Right ventricle myocardium inferior (tissue), 1 donor: ENCODE measurements at regions of chr3 and their contacts with region 1.

Region 1: GRCh38 chr3:46566036-46566641 is at the start of gene LRRC2:
- DNase-seq: peak; percentile 82
- ATAC-seq: peak; percentile 68
- total RNA-seq, gene LRRC2: 110 TPM

Region 2: DNA sequence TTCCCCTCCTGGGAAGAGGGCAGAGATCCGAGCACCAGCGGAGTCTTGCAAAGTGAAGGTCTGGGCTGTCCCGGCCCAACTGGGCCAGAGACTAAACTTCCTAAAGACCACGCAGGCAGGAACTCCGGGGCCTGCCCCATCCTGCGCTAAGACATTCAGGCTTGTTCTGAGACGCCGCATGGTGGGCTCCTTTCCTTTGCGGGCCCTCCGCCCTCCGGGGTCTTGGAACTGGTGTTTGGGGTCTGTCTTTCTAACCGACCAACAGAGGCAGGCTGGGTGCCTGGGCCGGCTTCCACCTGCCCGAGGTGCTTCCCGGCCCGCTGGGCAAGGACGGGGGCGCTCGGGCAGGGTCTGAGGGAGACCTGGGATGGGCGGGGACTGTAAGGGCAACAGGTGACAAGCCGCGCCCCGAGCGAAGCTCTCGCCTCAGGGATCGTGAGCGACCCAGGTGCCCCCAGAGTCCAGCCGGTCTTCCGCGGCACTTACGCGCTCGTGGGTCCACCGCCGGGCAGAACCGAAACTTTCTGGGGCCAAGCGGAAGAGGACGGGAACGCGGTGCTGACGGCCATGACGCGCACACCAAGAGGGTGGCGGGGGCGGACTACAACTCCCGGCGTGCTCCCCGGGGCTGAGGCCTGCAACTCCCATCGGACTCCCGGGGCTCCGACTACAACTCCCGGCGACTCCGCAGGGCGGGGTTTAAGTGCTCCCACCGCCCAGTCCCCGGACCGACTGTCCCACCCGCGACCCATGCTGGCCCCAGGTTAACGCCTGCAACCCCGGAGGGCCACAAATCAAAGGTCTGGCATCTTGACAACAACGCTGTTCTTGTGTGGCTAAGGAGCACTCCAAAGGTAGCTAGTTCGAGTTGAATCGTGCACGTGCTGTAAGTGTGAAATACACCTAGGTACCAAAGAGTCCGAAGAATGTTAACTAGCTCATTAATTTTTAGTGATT is 570.6 kb before region 1 on chr3 and contains the start of gene FYCO1:
- intact Hi-C with region 1: loop called (anchors 5 kb)
- DNase-seq: peak; percentile 97
- ATAC-seq: peak; percentile 95
- total RNA-seq, gene FYCO1: 107 TPM

Region 3: DNA sequence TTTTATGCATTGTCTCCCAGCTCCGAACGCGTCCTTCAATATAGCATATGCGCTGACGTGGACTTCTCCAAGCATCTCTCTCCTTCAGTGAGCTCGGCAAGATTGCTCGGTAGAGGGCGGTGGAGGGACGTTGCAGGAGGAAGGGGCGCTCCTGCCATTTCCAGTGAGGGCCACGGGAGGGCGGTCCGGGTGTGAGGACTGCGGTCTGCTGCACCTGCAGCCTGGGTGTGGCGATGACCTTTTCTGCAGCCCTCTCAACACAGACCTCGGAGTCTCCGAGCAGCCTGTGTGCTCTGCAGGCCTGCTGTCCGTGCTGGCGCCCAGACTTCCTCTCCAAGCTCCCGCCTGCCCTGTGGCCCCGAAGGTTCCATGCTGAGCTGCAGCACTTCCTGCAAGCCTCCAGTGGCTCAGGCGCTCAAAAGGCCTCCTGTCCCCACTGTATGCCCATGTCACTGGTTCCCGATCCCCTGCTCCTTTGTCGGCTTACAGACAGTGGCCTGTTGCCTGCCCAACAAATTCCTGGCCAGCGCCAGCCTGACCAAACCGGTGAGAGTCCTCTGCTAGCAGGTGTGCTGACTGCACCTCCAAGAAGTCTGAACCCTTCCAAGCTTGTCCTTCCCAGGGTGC is 77.3 kb before region 1 on chr3:
- intact Hi-C with region 1: loop called (anchors 2 kb)
- DNase-seq: peak; percentile 94
- ATAC-seq: peak; percentile 91

Region 4: DNA sequence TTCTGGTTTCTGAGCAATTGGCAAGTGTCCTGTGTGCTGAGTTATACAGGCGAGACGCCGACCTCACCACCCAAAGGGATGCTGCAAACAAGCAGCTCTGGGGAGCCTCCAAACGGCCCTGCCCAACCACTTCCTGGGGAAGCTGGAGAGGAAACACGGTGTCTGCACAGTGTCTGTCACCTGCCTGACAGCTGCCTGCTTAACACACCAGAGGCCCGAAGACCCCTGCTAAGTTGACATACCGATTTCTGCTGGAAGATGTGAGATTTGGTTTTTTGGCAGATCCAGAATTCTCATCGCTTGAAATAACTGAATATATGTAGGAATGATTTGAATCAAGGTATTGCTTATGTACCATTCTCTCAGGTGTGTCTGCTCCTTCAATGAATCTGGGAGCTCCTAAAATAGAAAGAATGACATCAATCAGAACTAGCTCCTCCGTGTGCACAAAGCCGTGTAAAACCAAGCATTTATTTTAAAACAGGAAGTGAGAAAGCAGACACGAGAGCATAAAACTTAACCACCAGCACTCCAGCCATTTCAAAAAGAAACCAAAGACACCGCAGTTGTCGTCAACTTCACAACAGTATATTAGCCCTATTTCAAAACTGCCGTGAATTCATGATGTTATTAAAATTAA is 27.2 kb before region 1 on chr3:
- intact Hi-C with region 1: loop called (anchors 2 kb)
- DNase-seq: peak; percentile 80
- ATAC-seq: peak; percentile 68

Region 5: DNA sequence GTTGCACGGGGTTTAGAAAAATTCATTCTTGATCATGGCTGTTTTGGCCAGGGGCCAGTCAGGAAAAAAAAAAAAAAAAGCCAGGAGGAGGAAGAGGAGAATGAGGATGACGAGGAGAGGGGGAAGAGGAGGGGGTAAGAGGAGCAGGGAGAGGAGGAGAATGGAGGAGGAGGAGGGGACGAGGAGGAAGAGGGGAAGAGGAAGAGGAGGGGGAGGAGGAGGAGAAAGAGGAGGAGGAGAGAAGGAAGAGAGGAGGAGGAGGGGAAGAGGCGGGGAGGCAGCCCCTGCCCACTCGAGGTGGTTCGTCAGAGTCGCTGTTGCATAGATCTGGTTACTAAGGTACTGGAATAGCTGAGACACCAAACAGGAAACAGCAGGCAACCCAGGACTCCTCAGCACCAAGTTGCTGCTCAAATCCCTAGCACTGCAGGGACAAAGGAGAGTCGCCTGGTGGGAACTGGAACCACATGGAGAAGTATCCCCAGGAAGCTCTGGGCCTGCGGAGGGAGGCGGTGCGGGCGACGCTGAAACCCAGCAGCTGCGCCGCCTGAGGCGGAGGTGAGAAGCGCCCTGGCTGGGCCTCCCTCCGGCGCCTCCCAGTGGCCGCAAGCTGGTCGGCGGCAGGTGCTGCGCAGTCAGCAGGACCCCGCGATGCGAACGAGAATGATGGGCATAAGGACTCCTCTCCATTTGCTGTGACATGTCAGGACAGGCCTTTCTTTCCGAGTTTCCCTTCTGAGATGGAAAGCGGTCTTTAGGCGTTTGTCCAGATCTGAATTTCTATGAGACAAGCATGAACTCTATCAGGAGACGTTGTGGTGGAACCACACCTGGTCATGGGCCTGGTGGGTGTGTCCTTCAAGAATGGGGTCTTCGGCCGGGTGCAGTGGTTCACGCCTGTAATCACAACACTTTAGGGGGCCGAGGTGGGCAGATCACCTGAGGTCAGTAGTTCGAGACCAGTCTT is 63.7 kb after region 1 on chr3:
- intact Hi-C with region 1: loop called (anchors 5 kb)
- DNase-seq: peak; percentile 88
- ATAC-seq: peak; percentile 89

Region 6: DNA sequence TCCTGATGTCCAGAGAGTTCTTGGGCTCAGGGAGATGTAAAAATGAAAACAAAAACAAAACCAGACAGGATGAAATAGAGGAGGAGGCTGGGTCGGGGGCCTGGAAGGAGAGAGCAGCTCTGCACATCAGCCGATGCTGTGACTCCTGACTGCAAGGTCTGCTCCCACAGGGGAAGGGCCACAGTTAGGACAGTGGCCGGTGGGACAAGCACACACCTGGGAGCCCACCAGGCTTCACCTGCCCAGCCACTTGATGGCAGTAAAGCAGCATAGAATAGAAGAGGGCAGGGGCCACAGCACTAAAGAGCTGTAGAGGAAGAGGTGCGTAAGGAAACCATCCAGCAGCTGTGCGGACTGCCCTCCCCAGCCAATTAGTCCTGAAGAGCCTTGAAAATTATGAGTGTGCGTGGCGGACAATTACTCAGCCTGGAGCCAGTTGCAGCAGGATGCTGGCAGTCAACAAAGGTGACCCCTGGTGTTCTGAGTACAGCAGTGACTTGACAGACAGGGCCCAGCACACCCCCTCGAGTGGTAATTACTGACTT is 97.5 kb after region 1 on chr3:
- intact Hi-C with region 1: loop called (anchors 1 kb)
- DNase-seq: no peak
- ATAC-seq: peak; percentile 14

Region 7: GRCh38 chr3:46695177-46695961 is 129.2 kb after region 1 on chr3:
- intact Hi-C with region 1: loop called (anchors 10 kb)
- DNase-seq: peak; percentile 84
- ATAC-seq: peak; percentile 16